Prostate gland (tissue), 2 donors: ENCODE measurements at regions of chr4 and their contacts with region 1.

Region 1: DNA sequence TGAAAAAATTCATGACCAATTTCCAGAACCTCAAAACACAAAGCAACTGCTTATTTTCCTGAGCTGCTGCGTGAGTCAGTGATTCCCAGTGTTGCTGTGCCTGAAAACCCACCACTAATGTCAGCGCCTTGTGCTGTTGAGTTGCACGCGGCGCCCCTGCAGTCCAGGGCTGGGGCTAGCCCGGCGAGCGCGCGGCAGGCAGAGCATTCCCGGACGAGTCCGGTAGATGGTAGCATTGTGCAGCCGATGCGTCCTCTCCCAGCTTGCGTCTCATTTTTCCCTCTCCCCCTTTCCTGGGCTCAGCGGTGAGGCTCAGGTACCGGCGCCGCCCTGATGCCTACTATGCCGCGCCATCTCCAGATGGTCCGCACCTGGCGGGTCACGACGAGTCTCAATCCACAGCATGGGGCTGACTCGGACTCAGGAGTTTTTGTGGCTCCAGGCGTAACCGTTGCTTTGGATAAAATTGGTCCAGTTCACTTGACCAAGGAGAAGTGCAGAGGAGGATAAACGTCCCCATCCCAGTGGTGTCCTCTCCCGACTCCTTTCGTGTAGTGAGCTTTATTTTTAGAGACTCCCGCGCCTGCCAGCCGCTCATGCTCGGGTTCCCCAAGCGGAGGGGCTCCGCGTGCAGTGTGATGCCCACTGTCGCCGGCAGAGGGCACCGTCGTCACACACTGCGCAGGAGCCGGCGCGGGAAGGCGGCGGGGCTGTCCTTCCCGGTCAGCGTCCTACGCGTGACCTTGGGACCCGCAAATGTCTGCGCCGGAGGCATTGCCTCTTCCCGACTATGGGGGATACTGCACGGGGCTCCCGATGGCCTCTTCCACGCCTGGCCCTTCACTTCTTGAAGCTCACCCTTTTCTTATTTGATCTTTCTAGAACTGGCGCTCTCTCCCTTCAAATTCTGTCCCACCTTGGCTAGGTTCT is 53.6 kb upstream of the IGFBP7 start:
- DNase-seq: peak; percentile 66
- H3K4me3 ChIP-seq: peak overlapping the region; percentile 29 to 44
- H3K27ac ChIP-seq: peak overlapping the region; percentile 45 to 46
- H3K4me1 ChIP-seq: no peaks in the 10 kb centered on the region
- H3K27me3 ChIP-seq: no peaks in the 10 kb centered on the region
- CTCF ChIP-seq: peak; percentile 56 to 88 (median 84)
- POLR2A ChIP-seq: no peak

Region 2: DNA sequence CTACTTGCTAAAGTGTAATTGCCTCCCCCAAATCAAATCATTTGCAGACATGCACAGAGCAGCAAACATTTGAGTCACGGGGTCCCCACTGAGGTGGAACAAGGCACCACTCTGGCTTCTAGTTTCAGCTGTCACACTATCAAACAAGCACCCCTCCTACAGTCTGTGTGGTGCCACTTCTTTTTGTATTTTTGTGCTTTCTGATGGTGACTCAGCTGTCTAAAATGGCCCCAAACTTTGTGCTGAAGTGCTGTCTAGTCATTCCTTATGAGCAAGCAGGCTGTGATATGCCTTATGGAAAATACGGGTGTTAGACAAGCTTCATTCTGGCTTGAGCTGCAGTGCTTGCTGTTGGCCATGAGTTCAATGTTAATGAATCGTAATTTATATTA is 69.0 kb before region 1 on chr4:
- intact Hi-C with region 1: no loop called
- DNase-seq: no peak
- H3K4me3 ChIP-seq: no peak overlapping the region
- H3K27ac ChIP-seq: no peak overlapping the region
- H3K4me1 ChIP-seq: no peaks in the 10 kb centered on the region
- H3K27me3 ChIP-seq: no peaks in the 10 kb centered on the region
- CTCF ChIP-seq: no peak
- POLR2A ChIP-seq: no peak

Region 3: DNA sequence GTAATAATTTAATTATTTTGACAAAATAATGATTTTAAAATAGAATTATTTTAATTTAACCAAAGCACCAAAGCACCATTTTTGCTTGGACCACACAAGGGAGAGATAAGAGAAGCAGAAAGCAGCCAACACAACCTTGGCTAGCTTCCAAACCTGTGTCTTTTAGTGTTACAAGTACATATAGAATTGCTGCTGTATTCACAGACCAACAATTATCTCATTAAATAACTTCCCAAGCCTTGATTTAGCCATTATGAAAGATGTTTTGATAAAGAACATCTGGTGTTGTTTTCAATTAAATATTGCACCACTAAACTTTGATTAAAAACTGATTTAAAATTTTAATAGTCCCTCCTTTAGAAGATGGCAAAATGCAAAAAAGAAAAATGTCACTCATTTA is 39.6 kb before region 1 on chr4:
- intact Hi-C with region 1: loop called (anchors 5 kb)
- DNase-seq: no peak
- H3K4me3 ChIP-seq: no peak overlapping the region
- H3K27ac ChIP-seq: no peak overlapping the region
- H3K4me1 ChIP-seq: no peaks in the 10 kb centered on the region
- H3K27me3 ChIP-seq: no peaks in the 10 kb centered on the region
- CTCF ChIP-seq: no peak
- POLR2A ChIP-seq: no peak